Caco-2 (cell line): ENCODE measurements at regions of chr11 and their contacts with region 1.

Region 1: GRCh38 chr11:88543902-88544655 is 206.5 kb upstream of the CTSC start:
- DNase-seq: peak; percentile 83 to 91
- H3K4me3 ChIP-seq: no peak overlapping the region
- H3K4me3 Mint-ChIP-seq: no peak overlapping the region
- H3K27ac Mint-ChIP-seq: no peak overlapping the region
- H3K4me1 ChIP-seq: no peaks in the 10 kb centered on the region
- H3K4me1 Mint-ChIP-seq: peaks cover 7% of the 10 kb centered on the region
- H3K27me3 ChIP-seq: no peaks in the 10 kb centered on the region
- H3K27me3 Mint-ChIP-seq: peaks cover 14% of the 10 kb centered on the region
- CTCF ChIP-seq: peak; percentile 98 to 99

Region 2: DNA sequence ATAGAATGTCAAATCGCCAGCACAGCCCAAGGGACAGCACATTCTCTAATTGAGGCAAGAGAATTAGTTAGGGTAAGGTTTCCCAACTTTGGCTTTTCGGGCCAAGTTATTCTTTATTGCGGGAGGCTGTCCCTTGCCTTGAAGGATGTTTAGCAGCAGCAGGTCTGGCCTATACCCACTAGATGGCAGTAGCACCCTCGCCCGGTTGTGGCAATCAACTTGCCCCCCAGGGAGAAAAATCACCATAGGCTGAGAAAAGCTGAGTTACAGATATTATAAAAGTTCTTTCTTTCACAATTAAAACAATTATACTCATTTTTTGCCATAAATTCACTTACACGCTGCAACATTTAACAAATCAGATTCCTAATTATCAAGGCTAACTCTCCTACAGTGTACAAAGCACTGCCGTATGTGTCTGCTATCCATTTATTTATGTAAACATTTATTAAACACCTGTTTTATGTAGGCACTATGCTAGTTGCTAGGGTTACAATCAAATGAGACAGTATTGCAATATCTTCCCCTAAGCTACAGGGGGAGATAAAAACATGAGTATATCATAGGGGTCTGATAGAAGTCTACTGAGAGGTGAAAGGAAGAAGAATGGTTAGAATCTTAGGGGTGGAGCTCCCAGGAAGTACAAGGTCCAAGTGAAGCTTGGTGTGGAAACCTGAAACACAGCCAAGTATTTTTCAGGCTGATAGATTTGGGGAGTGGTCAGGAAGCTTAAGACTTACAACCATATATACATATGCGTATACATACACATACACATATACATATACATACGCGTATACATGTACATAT is 821.1 kb before region 1 on chr11:
- CTCF ChIA-PET with region 1: interaction called, 3 read pairs
- POLR2A ChIA-PET with region 1: no interaction called
- intact Hi-C with region 1: loop called (anchors 1 kb)
- DNase-seq: peak; percentile 54 to 65
- H3K4me3 ChIP-seq: no peak overlapping the region
- H3K4me3 Mint-ChIP-seq: no peak overlapping the region
- H3K27ac Mint-ChIP-seq: no peak overlapping the region
- H3K4me1 ChIP-seq: peaks cover 7% of the 10 kb centered on the region
- H3K4me1 Mint-ChIP-seq: peaks cover 7% of the 10 kb centered on the region
- H3K27me3 ChIP-seq: no peaks in the 10 kb centered on the region
- H3K27me3 Mint-ChIP-seq: peaks cover 3% of the 10 kb centered on the region
- CTCF ChIP-seq: peak; percentile 96

Region 3: DNA sequence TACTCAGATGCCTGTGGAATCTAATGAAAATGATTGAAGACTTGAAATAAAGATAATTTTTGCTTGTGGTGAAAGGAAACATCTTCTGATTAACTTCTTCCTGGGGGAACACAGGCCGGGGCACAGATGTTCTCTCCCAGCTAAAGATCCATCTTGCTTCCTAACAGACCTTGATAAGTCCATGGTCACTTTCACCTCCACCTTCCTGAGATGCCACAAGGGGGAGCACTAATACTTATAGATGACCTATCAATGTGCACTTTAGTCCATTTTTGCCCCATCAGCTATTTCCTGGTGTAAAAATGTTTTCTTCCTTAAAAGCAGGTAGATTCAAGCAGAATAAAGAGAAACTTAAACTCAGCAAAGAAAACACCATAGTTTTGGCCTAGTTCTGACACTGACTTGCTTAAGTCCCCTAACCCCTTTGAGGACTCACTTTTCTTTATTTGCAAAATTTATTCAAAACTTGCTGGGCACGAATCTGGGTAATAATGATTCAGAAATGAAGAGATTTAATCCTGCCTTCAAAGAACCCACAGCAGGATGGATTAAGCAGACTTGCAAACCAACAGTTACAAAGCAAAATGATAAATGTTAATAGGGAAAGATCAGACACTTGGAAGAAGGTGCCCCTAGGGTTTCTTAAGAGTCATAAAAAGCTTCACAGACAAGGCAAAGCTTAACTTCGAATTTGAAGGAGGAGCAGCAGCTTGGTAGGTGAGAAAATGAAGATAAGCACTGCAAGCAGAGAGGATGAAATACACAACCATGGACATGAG is 527.5 kb before region 1 on chr11:
- CTCF ChIA-PET with region 1: interaction called, 12 read pairs
- POLR2A ChIA-PET with region 1: no interaction called
- intact Hi-C with region 1: loop called (anchors 1 kb)
- DNase-seq: peak; percentile 83 to 88
- H3K4me3 ChIP-seq: no peak overlapping the region
- H3K4me3 Mint-ChIP-seq: no peak overlapping the region
- H3K27ac Mint-ChIP-seq: no peak overlapping the region
- H3K4me1 ChIP-seq: no peaks in the 10 kb centered on the region
- H3K4me1 Mint-ChIP-seq: peaks cover 6% of the 10 kb centered on the region
- H3K27me3 ChIP-seq: no peaks in the 10 kb centered on the region
- H3K27me3 Mint-ChIP-seq: no peaks in the 10 kb centered on the region
- CTCF ChIP-seq: peak; percentile 88 to 89

Region 4: DNA sequence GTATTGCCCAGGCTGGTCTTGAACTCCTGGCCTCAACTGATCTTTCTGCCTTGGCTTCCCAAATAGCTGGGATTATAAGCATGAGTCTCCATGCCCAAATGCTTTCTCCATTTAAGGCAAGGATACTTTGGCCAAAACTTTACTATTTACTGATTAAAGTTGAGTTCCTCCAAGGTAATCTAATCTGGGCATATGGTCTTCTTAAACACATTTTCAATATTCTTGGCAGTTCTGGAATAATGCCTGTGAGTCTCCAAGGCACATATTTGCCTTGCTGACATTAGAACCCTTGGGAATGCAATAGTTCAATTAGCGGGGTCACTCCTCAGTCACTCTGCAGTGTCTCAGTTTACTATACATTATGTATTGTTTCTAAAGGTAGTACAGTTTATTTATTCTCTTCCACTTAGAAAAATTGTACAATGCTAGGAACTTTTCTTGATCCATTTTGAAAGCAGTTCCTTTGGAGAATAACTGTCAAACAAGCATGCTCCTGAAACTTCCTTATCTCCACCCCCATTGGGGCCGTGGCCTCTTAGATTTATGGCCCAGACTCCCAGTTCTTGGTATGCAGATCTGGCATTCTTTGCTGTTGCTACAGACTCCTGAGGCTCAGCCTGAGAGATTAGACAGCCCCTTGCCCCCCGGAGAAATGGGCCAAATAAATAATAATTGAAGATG is 355.7 kb before region 1 on chr11:
- CTCF ChIA-PET with region 1: no interaction called
- POLR2A ChIA-PET with region 1: no interaction called
- intact Hi-C with region 1: loop called (anchors 5 kb)
- DNase-seq: peak; percentile 74 to 88
- H3K4me3 ChIP-seq: no peak overlapping the region
- H3K4me3 Mint-ChIP-seq: no peak overlapping the region
- H3K27ac Mint-ChIP-seq: no peak overlapping the region
- H3K4me1 ChIP-seq: peaks cover 10% of the 10 kb centered on the region
- H3K4me1 Mint-ChIP-seq: peaks cover 8% of the 10 kb centered on the region
- H3K27me3 ChIP-seq: no peaks in the 10 kb centered on the region
- H3K27me3 Mint-ChIP-seq: no peaks in the 10 kb centered on the region
- CTCF ChIP-seq: no peak

Region 5: DNA sequence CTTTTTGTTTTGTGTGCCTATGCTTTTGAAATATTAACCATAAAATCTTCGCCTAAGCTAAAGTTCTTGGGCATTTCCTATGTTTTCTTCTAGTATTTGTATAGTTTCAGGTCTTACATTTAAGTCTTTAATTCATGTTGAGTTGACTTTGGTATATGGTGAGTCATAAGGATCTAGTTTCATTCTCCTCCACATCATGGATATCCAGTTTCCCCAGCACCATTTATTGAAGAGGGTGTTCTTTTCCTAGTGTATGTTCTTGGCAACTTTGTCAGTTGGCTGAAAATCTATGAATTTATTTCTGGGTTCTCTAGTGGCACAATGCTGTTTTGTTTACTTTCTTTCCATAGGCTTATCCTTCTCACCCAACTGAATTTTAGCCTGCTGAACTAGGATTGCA is 255.5 kb before region 1 on chr11:
- CTCF ChIA-PET with region 1: no interaction called
- POLR2A ChIA-PET with region 1: no interaction called
- intact Hi-C with region 1: loop called (anchors 2 kb)
- DNase-seq: no peak
- H3K4me3 ChIP-seq: no peak overlapping the region
- H3K4me3 Mint-ChIP-seq: no peak overlapping the region
- H3K27ac Mint-ChIP-seq: no peak overlapping the region
- H3K4me1 ChIP-seq: no peaks in the 10 kb centered on the region
- H3K4me1 Mint-ChIP-seq: no peaks in the 10 kb centered on the region
- H3K27me3 ChIP-seq: no peaks in the 10 kb centered on the region
- H3K27me3 Mint-ChIP-seq: no peaks in the 10 kb centered on the region
- CTCF ChIP-seq: no peak

Region 6: DNA sequence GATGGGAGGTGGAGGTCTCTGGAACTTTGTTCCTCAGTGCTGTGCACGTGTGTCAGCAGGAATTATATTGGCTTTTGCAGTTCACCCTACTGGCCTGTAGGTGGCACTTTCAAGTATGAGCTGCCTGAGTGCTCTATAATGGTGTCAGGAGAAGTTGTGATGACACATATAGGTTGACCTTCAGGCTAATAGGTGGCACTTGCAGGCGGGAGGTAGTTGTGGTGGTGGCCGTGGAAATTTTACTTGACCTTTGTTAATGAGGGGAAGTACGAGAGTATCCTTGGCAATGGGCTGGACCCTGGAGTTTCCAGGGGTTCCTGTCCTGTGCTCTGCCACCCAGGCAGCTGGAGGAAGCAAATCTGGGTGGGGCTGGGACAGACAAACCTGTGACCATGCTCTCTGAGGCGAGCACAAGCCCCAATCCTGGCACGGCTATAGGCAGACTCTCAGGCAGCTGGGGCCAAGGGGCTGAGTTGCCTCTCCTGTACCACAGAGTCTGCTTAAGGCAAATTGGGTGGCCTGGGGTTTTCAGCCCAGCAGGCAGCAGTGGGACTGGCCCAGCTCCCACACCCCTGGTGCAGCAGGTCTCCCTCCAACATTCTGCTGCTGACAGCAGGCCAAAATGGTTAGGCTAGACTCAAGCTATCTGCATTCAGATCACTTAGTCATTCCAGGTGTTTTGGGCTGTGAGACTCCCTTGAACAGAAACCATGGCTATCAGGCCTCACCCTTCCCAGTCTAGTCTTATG is 59.0 kb before region 1 on chr11:
- CTCF ChIA-PET with region 1: interaction called, 4 read pairs
- POLR2A ChIA-PET with region 1: no interaction called
- intact Hi-C with region 1: loop called (anchors 1 kb)
- DNase-seq: peak; percentile 60 to 70
- H3K4me3 ChIP-seq: no peak overlapping the region
- H3K4me3 Mint-ChIP-seq: no peak overlapping the region
- H3K27ac Mint-ChIP-seq: no peak overlapping the region
- H3K4me1 ChIP-seq: no peaks in the 10 kb centered on the region
- H3K4me1 Mint-ChIP-seq: no peaks in the 10 kb centered on the region
- H3K27me3 ChIP-seq: no peaks in the 10 kb centered on the region
- H3K27me3 Mint-ChIP-seq: peaks cover 15% of the 10 kb centered on the region
- CTCF ChIP-seq: peak; percentile 79

Region 7: DNA sequence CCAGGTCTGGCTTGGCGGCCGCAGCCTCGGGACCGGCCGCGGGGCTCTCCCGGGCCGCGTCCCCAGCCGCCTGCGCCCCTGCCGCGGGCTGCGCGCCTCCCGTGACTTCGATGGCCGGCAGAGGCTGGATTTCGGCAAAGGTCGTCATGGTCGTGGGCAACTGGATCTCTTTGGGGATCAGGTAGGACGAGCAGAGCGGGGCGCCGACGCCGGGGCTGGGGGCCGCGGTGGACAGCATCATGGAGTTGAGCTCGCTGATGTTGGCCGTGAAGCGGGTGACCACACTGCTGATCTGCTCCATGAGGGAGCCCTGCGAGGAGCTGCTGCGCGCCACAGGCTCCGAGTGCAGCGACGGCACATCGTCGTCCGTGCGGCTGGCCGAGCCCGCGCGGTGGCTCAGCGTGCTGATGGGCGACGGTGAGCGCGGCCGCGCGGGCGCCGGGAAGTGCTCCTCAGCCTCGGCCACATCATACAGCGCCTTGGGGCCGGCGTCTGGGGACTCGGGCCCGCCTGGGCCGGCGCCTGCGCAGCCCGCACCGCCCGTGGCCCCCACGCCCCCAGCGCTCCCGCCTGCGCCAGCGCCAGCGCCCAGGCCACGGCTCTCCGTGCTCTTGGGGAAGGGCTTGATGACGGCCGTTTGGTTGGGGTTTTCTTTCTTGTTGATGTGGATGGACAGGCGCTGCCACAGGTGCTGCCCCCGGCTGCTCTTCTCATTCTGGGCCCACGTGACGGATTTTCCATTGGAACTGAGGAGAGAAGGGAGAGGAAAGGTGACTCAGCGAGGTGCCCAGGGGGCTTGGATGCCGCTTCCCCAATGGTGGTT is 35.1 kb before region 1 on chr11:
- CTCF ChIA-PET with region 1: no interaction called
- POLR2A ChIA-PET with region 1: no interaction called
- intact Hi-C with region 1: no loop called
- DNase-seq: no peak
- H3K4me3 ChIP-seq: no peak overlapping the region
- H3K4me3 Mint-ChIP-seq: no peak overlapping the region
- H3K27ac Mint-ChIP-seq: no peak overlapping the region
- H3K4me1 ChIP-seq: no peaks in the 10 kb centered on the region
- H3K4me1 Mint-ChIP-seq: no peaks in the 10 kb centered on the region
- H3K27me3 ChIP-seq: no peaks in the 10 kb centered on the region
- H3K27me3 Mint-ChIP-seq: peaks cover 3% of the 10 kb centered on the region
- CTCF ChIP-seq: no peak

Region 8: GRCh38 chr11:88569342-88569741 is 25.3 kb after region 1 on chr11:
- CTCF ChIA-PET with region 1: no interaction called
- POLR2A ChIA-PET with region 1: no interaction called
- intact Hi-C with region 1: no loop called
- DNase-seq: no peak
- H3K4me3 ChIP-seq: no peak overlapping the region
- H3K4me3 Mint-ChIP-seq: no peak overlapping the region
- H3K27ac Mint-ChIP-seq: no peak overlapping the region
- H3K4me1 ChIP-seq: no peaks in the 10 kb centered on the region
- H3K4me1 Mint-ChIP-seq: no peaks in the 10 kb centered on the region
- H3K27me3 ChIP-seq: no peaks in the 10 kb centered on the region
- H3K27me3 Mint-ChIP-seq: peaks cover 17% of the 10 kb centered on the region
- CTCF ChIP-seq: no peak